Motor neuron (in vitro differentiated cells): ENCODE measurements at regions of chr11 and their contacts with region 1.

Region 1: DNA sequence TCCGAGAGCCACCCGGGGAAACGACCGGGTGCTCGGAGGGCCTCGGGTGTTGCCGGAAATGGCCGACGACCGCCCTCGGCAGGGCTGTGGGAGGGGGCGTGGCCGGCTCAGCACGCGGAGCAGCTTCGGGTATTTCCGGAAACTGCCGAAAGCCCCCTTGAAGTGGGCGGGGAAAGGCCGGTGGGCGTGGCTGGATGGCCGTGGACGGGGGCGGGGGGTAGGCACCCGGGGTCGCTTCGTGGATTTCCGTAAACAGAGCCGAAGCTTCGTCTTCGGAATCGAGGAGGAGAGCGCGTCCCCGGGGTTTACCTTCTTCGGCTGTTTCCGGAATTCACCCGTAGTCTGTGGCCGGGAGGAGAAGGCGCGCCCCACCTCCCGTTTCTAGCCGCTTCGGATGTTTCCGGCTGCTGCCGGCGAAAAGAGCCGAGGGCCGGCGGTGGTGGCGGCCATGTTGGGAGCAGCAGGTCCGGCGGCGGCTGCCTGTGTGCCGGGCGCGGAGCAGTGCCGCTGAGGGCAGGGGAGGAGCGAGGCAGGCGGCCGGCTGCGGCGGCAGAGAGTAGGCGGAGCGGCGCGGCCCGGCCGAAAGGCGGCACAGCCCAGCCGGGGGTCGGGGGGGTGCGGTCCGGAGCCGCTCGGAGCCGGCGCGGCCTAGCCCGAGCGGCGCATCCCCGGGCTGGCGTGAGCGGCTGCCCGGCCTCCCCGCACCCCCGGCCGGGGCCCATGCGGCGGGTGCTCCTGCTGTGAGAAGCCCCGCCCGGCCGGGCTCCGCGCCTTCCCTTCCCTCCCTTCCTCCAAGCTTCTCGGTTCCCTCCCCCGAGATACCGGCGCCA is at the start of gene MARK2:
- ATAC-seq: peak; percentile 85 to 93 (median 90)
- H3K4me3 ChIP-seq: peak within 1 kb of the TSS; percentile 49 to 91 (median 77)
- H3K27ac ChIP-seq: peak within 1 kb of the TSS; percentile 77
- H3K4me1 ChIP-seq: peaks cover 18 to 21% of the 10 kb centered on the region in 2 donors
- total RNA-seq, gene MARK2: 9.2 to 36.8 (median 13.6) TPM

Region 2: DNA sequence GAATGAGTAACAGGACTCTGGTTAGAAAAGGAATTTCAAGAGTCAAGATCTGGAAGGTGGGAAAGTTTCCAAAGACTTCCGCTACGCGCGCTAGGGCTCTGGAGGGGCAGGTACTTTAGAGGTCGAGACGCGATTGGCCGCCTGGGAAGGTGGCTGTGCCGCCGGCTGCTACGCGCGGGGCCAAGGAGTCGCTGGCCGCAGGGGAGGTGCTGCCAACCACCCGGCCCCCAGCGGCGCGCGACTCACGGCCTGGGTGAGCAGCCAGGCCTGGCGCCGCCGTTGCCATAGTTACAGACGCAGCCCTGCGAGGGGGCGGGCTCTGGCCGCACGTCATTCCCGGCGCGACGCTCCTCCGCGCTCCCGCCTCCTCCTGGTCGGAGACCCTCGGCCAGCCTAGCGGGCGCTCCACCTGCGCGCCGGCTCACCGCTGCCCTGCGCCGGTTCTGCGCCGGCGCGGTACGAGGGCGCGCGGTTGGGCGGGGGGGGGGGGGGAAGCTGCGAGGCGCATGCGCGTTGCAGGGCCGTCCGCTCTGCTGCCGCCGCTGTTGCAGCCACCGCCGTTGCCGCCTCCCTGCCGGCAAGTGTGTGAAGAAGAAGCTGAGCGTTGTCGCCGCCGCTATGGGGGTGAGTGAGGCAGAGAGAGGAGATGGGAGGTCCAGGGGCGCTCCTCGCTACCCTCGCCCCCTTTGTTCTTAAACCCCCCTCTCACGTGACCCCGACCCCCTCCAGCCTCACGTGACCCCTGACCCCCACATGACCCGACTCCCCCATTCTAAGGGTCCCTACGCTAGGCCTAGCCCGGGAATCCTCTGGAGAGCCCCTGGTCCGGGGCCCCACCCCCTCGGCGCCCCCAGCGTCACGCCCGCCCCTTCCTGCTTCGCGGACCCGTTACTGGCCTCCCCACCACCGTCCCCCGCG is 99.8 kb after region 1 on chr11 and contains the start of gene NAA40:
- in situ Hi-C with region 1: loop called in 4 of 9 experiments (anchors 10 to 25 kb)
- ATAC-seq: peak; percentile 93 to 98 (median 95)
- H3K4me3 ChIP-seq: peak within 1 kb of the TSS; percentile 74 to 98 (median 94)
- H3K27ac ChIP-seq: peak within 1 kb of the TSS; percentile 92 to 96
- H3K4me1 ChIP-seq: peaks cover 10 to 13% of the 10 kb centered on the region in 2 donors
- total RNA-seq, gene NAA40: 11.3 to 39.2 (median 19.5) TPM

Region 3: DNA sequence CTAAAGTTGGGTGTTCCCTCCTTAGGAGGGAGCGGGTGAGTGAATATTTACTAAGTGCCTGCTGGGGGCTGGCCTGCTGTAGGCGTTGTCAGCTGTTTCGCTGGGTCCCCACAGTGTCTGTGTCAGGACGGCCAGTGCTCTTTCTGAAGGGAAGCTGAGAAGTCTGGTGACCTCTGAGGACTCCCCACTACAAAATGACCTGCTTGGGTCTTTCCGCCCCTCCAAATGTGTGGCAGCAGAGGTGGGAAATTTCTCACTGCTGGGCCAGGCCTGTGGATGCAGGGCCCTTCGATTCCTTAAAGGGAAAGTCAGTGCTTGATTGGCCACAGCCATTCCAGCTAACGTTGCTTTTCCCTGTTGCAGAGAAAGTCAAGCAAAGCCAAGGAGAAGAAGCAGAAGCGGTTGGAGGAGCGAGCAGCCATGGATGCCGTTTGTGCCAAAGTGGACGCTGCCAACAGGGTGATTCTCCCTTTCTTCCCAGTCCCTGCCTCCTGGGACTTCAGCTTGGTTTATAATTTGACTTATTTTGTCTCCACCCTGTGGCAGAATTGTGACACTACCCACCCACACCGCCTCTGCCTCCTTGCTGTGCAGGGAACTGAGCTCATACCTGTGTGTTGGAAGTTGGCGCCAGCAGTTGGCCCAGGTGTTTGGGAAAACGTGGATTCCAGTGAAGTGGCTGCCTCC is 106.7 kb after region 1 on chr11:
- in situ Hi-C with region 1: loop called in 5 of 9 experiments (anchors 10 to 25 kb)
- ATAC-seq: peak; percentile 88 to 96 (median 92)
- H3K4me3 ChIP-seq: no peak overlapping the region
- H3K27ac ChIP-seq: no peak overlapping the region
- H3K4me1 ChIP-seq: peaks cover 8 to 10% of the 10 kb centered on the region in 2 donors

Region 4: GRCh38 chr11:63974259-63975143 is 135.6 kb after region 1 on chr11 and contains the start of gene COX8A:
- in situ Hi-C with region 1: loop called in 1 of 9 experiments (anchors 25 kb)
- ATAC-seq: peak; percentile 92 to 97 (median 96)
- H3K4me3 ChIP-seq: peak within 1 kb of the TSS; percentile 79 to 90 (median 80)
- H3K27ac ChIP-seq: peak within 1 kb of the TSS; percentile 96 to 97
- H3K4me1 ChIP-seq: peaks cover 21 to 23% of the 10 kb centered on the region in 2 donors
- total RNA-seq, gene COX8A: 475 to 790 (median 563) TPM

Region 5: GRCh38 chr11:64165849-64166635 is 327.1 kb after region 1 on chr11 and contains the start of gene MACROD1:
- in situ Hi-C with region 1: loop called in 7 of 9 experiments (anchors 25 kb)
- ATAC-seq: peak; percentile 92 to 95 (median 95)
- H3K4me3 ChIP-seq: peak within 1 kb of the TSS; percentile 45 to 66 (median 48)
- H3K27ac ChIP-seq: peak within 1 kb of the TSS in 1 of 2 donors; percentile 15
- H3K4me1 ChIP-seq: peaks cover 12 to 15% of the 10 kb centered on the region in 2 donors
- total RNA-seq, gene MACROD1: 10.2 to 47.7 (median 16.6) TPM